AG04449 (cell line): ENCODE measurements at regions of chr7 and their contacts with region 1.

Region 1: GRCh38 chr7:78020136-78020873 is 221.7 kb downstream of the PHTF2 start:
- DNase-seq: peak; percentile 61
- H3K4me3 ChIP-seq: peak overlapping the region; percentile 64
- CTCF ChIP-seq: peak; percentile 62

Region 2: GRCh38 chr7:77940647-77941046 is 79.7 kb before region 1 on chr7:
- CTCF ChIA-PET with region 1: interaction called, 14 read pairs
- POLR2A ChIA-PET with region 1: interaction called, 3 read pairs
- DNase-seq: no peak
- H3K4me3 ChIP-seq: no peak overlapping the region
- CTCF ChIP-seq: peak; percentile 29

Region 3: DNA sequence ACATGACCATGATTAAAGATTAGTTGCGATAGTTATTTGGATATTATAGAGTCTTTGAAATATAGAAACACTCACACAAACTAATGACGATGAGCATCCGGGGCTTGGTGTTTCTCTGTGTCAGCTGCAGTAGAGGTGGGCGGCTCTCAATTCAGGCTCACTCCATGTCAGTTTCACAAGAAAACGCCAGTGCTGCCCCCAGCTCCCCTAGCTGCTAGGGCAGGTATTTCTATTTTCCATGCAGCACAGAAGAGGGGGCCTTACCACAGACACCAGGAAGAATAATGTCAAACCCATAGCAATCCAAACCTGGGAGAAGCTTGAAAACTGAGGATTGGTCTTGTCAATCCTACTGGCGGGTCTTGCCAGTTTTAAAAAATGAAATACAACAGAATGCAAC is 24.6 kb before region 1 on chr7:
- CTCF ChIA-PET with region 1: no interaction called
- POLR2A ChIA-PET with region 1: no interaction called
- DNase-seq: no peak
- H3K4me3 ChIP-seq: no peak overlapping the region
- CTCF ChIP-seq: no peak

Region 4: GRCh38 chr7:78033410-78033809 is 13.1 kb after region 1 on chr7:
- CTCF ChIA-PET with region 1: interaction called, 12 read pairs
- POLR2A ChIA-PET with region 1: no interaction called
- DNase-seq: no peak
- H3K4me3 ChIP-seq: no peak overlapping the region
- CTCF ChIP-seq: no peak

Region 5: DNA sequence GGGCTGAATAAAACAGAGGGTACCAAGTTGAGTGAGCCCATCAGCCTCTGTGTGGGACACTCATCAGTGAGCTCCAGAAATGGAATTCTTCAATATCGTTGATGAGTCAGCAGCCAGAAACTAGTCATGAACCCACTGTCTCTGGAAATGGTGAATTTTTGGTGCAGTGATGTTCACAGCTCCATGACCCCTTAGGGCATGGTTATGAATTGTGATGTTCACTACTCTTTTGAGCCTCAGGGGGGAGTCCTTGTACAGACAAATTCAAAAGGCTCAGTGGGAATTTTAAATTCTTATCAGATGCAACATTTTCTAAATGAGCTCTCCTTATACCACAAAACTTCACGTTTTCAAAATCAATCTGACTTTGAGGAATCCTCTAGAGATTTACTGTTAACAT is 114.0 kb after region 1 on chr7:
- CTCF ChIA-PET with region 1: interaction called, 27 read pairs
- POLR2A ChIA-PET with region 1: no interaction called
- DNase-seq: no peak
- H3K4me3 ChIP-seq: no peak overlapping the region
- CTCF ChIP-seq: peak; percentile 57

Region 6: GRCh38 chr7:78222001-78222751 is 201.9 kb after region 1 on chr7:
- CTCF ChIA-PET with region 1: interaction called, 12 read pairs
- POLR2A ChIA-PET with region 1: no interaction called
- DNase-seq: peak; percentile 87
- H3K4me3 ChIP-seq: no peak overlapping the region
- CTCF ChIP-seq: no peak

Region 7: DNA sequence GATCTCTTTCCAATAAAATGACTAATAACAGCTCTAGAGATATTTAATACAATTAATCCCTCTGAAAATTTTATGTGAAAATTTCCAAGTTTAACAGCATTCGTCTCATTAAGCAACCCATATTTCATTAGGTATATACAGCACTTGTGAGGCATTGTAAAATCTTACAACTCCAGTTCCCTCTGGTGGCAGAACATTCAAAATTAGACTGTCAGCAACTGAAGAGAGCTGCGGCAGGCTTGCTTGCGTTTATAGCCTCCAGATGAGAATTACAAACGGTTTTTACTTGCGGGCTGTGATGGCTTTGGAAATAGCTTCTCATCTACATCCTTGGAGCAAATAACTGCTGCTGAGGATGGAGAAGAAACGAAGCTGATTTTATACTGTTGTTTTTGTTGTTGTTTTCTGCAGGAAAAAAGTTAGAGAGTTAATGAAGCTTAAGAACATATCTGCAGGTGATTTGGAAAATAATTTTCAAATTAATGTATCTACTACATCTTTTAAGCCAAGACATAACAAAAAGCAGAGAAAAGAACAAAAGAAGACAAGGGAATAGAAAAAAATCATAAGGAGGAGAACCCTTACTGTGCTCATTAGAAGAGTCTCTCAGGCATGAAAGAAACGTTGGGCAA is 1261.9 kb after region 1 on chr7:
- CTCF ChIA-PET with region 1: interaction called, 10 read pairs
- POLR2A ChIA-PET with region 1: no interaction called
- DNase-seq: peak; percentile 29
- H3K4me3 ChIP-seq: peak overlapping the region; percentile 19
- CTCF ChIP-seq: peak; percentile 56